ENCODE measurements at regions of chr7 and their contacts with region 1.

Region 1: GRCh38 chr7:27224983-27225934 is 17.3 kb upstream of the EVX1 start:
- DNase-seq: no peak
- H3K4me3 ChIP-seq: no peak overlapping the region
- H3K27ac ChIP-seq: no peak overlapping the region
- H3K27me3 ChIP-seq: peaks cover 86% of the 10 kb centered on the region
- CTCF ChIP-seq: no peak

Region 2: GRCh38 chr7:27196287-27196767 is 28.9 kb before region 1 on chr7:
- CTCF ChIA-PET with region 1: no interaction called
- POLR2A ChIA-PET with region 1: no interaction called
- DNase-seq: peak; percentile 37
- H3K4me3 ChIP-seq: no peak overlapping the region
- H3K27ac ChIP-seq: no peak overlapping the region
- H3K27me3 ChIP-seq: peaks cover 83% of the 10 kb centered on the region
- CTCF ChIP-seq: peak; percentile 80

Region 3: DNA sequence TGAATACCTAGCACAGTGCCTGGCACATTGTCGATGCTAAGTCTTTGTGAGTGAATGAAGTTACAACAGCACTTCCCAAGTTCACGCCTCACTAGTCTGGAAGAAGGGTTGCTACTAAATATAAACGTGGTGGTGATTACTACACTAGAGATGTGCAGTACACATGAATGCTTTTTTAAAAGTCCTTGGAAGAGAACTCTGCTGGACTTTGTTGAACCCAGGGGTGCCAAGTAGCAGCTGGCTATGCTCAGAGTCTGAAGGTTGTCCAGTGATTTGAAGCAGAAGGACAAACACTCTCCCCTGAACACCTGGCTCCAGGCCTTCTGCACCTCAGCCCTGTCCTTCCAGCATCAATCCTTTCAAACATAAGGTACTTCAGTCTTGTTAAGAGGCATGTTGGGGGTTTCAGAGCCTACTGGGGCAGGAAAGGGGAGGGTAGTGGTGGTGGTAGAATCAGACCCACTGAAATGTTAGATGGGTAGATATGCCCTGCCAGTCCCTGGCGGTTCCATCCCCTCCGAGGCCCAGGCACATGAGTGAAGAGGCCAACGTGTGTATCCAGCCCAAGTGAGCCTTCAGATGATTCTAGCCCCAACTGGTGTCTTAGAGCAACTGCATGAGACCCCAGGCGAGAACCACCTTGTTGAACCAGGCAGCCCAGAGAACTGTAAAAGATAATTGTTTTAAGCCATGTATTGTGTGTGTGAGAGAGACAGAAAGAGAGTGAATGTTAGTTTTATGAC is 609.1 kb after region 1 on chr7:
- CTCF ChIA-PET with region 1: interaction called, 10 read pairs
- POLR2A ChIA-PET with region 1: no interaction called
- DNase-seq: no peak
- H3K4me3 ChIP-seq: no peak overlapping the region
- H3K27ac ChIP-seq: no peak overlapping the region
- H3K27me3 ChIP-seq: no peaks in the 10 kb centered on the region
- CTCF ChIP-seq: no peak